GM13976 (cell line): ENCODE measurements at regions of chr7 and their contacts with region 1.

Region 1: GRCh38 chr7:24979863-24980533 is at the start of gene OSBPL3:
- DNase-seq: peak; percentile 96
- CTCF ChIP-seq: peak; percentile 40

Region 2: DNA sequence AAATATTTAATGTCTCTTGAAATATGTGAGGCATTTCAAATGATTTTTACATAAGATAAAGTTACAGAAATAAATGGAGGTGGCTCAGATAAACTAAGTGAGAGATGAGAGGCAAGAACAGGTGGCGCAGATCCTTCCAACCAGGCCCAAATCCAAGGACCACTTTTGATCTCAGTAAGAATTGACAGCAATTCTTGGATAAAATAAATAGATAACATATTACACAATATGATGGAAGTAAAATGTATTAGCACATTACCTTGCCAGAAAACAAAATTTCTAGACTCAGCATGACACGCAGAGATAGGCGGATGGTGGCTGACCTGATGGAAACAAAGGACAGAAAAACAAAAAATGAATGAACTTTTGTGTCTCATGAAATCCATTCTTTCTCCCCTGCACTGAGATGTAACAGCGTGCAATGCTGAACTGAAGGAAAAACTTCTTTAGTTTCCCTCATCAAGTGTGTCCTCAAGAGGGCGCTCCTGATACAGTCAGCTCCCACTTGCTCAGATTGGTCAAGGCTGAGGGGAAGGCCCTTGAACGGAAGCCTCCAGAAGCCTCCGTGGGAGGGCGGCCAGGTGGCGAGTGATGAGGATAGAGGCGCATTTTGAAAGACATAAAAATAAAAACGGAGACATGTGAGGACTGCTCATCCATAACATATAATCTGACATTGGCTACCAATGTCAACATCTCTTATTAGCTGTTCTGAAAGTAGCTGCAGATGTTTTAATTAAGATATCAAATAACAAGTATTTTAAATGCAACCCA is 159.9 kb before region 1 on chr7:
- in situ Hi-C with region 1: loop called (anchors 10 kb)
- DNase-seq: peak; percentile 76
- CTCF ChIP-seq: peak; percentile 76

Region 3: GRCh38 chr7:25069900-25070443 is 90.0 kb after region 1 on chr7:
- in situ Hi-C with region 1: loop called (anchors 10 kb)
- DNase-seq: peak; percentile 78
- CTCF ChIP-seq: peak; percentile 68